ENCODE measurements at regions of chr7 and their contacts with region 1.

Region 1: GRCh38 chr7:86814661-86815379 is 171.1 kb downstream of the GRM3 start:
- DNase-seq: no peak
- ATAC-seq: no peak
- H3K4me3 ChIP-seq: no peak overlapping the region
- H3K27ac ChIP-seq: no peak overlapping the region
- H3K4me1 ChIP-seq: no peaks in the 10 kb centered on the region
- H3K27me3 ChIP-seq: no peaks in the 10 kb centered on the region
- CTCF ChIP-seq: peak in 6 of 9 donors; percentile 23 to 55 (median 38)

Region 2: GRCh38 chr7:86667732-86668131 is 147.1 kb before region 1 on chr7:
- intact Hi-C with region 1: loop called in 1 of 10 experiments (anchors 10 kb)
- DNase-seq: no peak
- ATAC-seq: no peak
- H3K4me3 ChIP-seq: no peak overlapping the region
- H3K27ac ChIP-seq: no peak overlapping the region
- H3K4me1 ChIP-seq: no peaks in the 10 kb centered on the region
- H3K27me3 ChIP-seq: no peaks in the 10 kb centered on the region
- CTCF ChIP-seq: no peak

Region 3: GRCh38 chr7:86776136-86776535 is 38.7 kb before region 1 on chr7:
- intact Hi-C with region 1: no loop called
- DNase-seq: no peak
- ATAC-seq: no peak
- H3K4me3 ChIP-seq: no peak overlapping the region
- H3K27ac ChIP-seq: no peak overlapping the region
- H3K4me1 ChIP-seq: no peaks in the 10 kb centered on the region
- H3K27me3 ChIP-seq: no peaks in the 10 kb centered on the region
- CTCF ChIP-seq: no peak

Region 4: DNA sequence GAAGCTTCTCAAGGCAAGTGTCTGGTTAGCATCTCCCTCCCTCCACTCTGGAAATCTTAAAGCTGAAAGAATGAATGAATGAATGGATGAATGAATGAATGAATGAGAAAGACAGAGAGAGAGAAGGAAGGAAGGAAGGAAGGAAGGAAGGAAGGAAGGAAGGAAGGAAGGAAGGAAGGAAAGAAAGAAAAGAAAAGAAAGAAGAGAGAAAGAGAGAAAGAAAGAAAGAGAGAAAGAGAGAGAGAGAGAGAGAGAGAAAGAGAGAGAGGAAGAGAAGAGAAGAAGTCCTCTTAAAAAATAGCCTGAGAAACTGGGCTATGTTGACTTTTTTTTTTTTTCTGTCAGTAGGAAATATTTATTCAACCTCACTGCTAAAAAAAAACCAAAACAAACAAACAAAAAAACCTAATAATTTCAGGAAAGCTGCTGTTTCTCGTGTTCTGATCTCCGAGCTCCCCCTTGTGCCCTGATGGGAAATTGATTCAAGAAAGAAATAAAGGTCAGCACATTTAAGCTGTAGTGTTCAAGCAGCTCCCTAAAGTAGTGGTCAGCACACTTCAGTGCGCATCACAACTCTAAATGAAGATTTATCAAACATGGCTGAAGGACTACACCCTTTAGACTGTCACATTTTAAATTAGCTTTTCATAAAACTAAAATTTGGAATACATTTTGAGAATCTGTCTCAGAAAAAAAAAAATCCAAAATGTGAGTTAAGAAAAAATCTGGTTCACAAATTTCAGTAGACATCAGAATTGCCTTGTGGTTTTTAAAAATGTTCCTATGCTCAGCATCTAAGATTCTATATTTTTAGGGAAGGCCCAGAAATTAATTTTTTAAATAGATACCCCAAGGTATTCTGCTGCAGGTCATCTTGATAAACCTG is 90.4 kb after region 1 on chr7:
- intact Hi-C with region 1: no loop called
- DNase-seq: no peak
- ATAC-seq: no peak
- H3K4me3 ChIP-seq: no peak overlapping the region
- H3K27ac ChIP-seq: no peak overlapping the region
- H3K4me1 ChIP-seq: no peaks in the 10 kb centered on the region
- H3K27me3 ChIP-seq: no peaks in the 10 kb centered on the region
- CTCF ChIP-seq: peak in 8 of 9 donors; percentile 17 to 62 (median 57)